ENCODE measurements at regions of chr7 and their contacts with region 1.

Region 1: DNA sequence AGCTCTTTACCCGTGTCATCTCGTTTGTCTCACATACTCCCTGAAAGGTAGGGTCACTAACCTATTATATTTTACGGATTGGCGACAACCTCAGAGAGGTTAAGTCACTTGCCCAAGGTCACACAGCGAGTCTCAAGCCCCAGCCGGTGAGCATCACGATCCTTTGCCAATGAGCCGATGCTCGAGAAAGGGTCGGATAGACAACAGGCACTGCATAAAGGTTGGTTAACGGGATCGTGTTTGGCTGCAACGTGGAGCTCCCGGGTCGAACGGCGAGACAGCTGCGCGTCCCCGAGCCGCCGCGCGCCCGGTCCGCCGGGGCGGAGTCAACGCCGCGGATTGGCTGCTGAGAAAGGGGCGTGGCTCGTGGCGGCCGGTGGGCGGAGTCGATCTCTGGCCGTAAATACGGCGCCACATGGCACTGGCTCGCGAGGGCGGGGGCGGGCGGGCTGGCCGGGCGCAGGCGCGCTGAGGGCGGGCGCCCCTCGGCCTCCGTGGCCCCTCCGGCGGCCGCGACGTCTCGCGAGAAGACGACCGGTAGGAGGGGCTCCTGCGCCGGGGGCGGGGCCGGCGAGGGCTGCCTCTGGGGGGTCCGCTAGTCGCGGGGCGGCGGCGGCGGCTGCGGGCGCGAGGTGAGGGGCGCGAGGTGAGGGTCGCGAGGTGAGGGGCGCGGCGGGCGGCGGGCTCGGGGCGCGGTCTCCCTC is at the start of gene CHST12:
- DNase-seq: peak; percentile 97
- ATAC-seq: peak; percentile 70
- H3K4me3 Mint-ChIP-seq: peak within 1 kb of the TSS; percentile 79
- H3K27ac Mint-ChIP-seq: no peak within 1 kb of the TSS
- H3K4me1 Mint-ChIP-seq: peaks cover 41% of the 10 kb centered on the region
- H3K27me3 Mint-ChIP-seq: peaks cover 6% of the 10 kb centered on the region
- total RNA-seq, gene CHST12: 1.8 to 1.9 TPM

Region 2: GRCh38 chr7:2019607-2020511 is 383.3 kb before region 1 on chr7:
- CTCF ChIA-PET with region 1: no interaction called
- POLR2A ChIA-PET with region 1: no interaction called
- intact Hi-C with region 1: loop called in 1 of 2 experiments (anchors 2 kb)
- DNase-seq: peak; percentile 81
- ATAC-seq: peak; percentile 93
- H3K4me3 Mint-ChIP-seq: peak overlapping the region; percentile 45
- H3K27ac Mint-ChIP-seq: peak overlapping the region; percentile 86
- H3K4me1 Mint-ChIP-seq: peaks cover 25% of the 10 kb centered on the region
- H3K27me3 Mint-ChIP-seq: no peaks in the 10 kb centered on the region

Region 3: GRCh38 chr7:2232766-2233520 is 170.2 kb before region 1 on chr7 and contains the start of gene MAD1L1:
- CTCF ChIA-PET with region 1: no interaction called
- POLR2A ChIA-PET with region 1: no interaction called
- intact Hi-C with region 1: loop called in 1 of 2 experiments (anchors 1 kb)
- DNase-seq: peak; percentile 95
- ATAC-seq: peak; percentile 94
- H3K4me3 Mint-ChIP-seq: peak within 1 kb of the TSS; percentile 83
- H3K27ac Mint-ChIP-seq: peak within 1 kb of the TSS; percentile 86
- H3K4me1 Mint-ChIP-seq: peaks cover 26% of the 10 kb centered on the region
- H3K27me3 Mint-ChIP-seq: no peaks in the 10 kb centered on the region
- total RNA-seq, gene MAD1L1: 50.2 to 61.7 TPM

Region 4: GRCh38 chr7:2241580-2242540 is 161.3 kb before region 1 on chr7 and contains the starts of genes MRM2 and NUDT1:
- CTCF ChIA-PET with region 1: no interaction called
- POLR2A ChIA-PET with region 1: no interaction called
- intact Hi-C with region 1: loop called in 1 of 2 experiments (anchors 1 kb)
- DNase-seq: peak; percentile 84
- ATAC-seq: peak; percentile 82
- H3K4me3 Mint-ChIP-seq: peak within 1 kb of the TSS; percentile 88
- H3K27ac Mint-ChIP-seq: peak within 1 kb of the TSS; percentile 88
- H3K4me1 Mint-ChIP-seq: peaks cover 10% of the 10 kb centered on the region
- H3K27me3 Mint-ChIP-seq: no peaks in the 10 kb centered on the region
- total RNA-seq, gene MRM2: 28.7 to 32.1 TPM
- total RNA-seq, gene NUDT1: 52.5 to 100 TPM

Region 5: DNA sequence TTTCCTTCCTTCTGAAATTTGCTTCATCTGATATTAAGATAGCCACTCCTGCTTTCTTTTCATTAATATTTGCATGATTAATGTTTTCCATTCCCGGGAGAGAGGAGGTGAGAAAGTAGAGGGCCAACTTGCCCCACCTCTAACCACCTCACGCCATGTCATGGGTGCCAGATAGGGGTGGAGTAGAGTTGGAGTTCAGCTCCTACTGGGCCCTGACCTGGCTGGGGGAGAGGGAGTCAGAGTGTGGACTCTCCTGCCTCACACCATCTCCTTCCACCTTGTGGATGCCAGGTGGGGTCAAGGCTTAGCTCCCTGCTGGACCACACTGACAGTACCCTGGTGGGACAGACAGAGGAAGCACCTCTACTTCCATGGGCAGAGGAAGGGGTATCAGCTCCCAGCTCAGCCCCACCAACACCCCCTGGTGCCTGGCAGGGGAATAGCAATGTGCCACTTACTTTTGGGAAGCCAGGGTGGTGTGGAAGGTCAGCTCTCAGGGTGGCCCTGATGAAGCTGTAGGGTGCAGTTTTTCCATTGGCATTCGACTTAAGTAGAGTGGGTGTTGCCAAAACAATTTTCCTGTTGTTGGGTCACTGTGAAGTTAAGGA is 28.2 kb after region 1 on chr7:
- CTCF ChIA-PET with region 1: interaction called, 17 read pairs
- POLR2A ChIA-PET with region 1: no interaction called
- intact Hi-C with region 1: no loop called
- DNase-seq: peak; percentile 68
- ATAC-seq: peak; percentile 76
- H3K4me3 Mint-ChIP-seq: no peak overlapping the region
- H3K27ac Mint-ChIP-seq: no peak overlapping the region
- H3K4me1 Mint-ChIP-seq: peaks cover 5% of the 10 kb centered on the region
- H3K27me3 Mint-ChIP-seq: no peaks in the 10 kb centered on the region

Region 6: DNA sequence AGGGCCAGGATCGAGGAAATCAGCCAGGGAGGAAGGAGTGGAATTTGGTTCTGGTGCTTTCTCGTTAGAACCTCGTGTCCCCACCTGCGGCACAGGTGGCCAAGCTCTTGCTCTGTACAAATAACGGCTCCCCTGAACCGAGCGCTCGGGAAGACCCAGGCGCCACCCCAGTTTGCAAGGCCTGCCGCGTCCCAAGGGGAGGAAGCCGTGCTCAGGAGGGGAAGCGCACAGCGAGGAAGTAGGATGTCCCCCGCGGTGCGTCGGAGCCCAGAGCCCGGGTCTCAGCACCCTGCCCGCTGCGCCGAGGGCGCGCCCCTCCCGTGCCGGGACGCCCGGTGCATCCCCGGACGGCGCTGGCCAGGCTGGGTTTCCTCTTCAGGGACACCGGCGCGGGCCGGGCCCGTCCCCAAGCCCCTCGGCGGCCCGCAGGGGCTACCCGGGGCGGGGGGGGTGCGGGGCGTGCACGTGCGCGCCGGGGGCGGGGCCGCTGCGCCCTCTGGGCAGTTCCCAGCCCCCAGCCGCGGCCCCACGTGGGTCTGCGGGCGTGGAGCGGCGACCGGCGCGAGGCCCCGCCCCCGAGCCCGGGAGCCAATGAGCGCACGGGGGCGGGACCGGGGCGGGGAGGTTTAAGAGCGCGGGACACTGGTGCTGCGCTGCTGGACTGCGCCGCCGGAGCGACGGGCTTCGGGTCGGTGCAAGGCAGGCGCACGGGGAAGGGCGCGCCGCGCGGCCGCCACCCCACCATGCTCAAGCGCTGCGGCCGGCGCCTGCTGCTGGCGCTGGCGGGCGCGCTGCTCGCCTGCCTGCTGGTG is 116.2 kb after region 1 on chr7 and contains the start of gene LFNG:
- CTCF ChIA-PET with region 1: no interaction called
- POLR2A ChIA-PET with region 1: no interaction called
- intact Hi-C with region 1: loop called (anchors 1 to 5 kb)
- DNase-seq: peak; percentile 91
- ATAC-seq: peak; percentile 75
- H3K4me3 Mint-ChIP-seq: peak within 1 kb of the TSS; percentile 89
- H3K27ac Mint-ChIP-seq: peak within 1 kb of the TSS; percentile 73
- H3K4me1 Mint-ChIP-seq: peaks cover 32% of the 10 kb centered on the region
- H3K27me3 Mint-ChIP-seq: no peaks in the 10 kb centered on the region
- total RNA-seq, gene LFNG: 14.9 to 23.3 TPM

Region 7: GRCh38 chr7:2632733-2633537 is 229.8 kb after region 1 on chr7:
- CTCF ChIA-PET with region 1: no interaction called
- POLR2A ChIA-PET with region 1: no interaction called
- intact Hi-C with region 1: loop called in 1 of 2 experiments (anchors 1 kb)
- DNase-seq: peak; percentile 77
- ATAC-seq: peak; percentile 7
- H3K4me3 Mint-ChIP-seq: peak overlapping the region; percentile 91
- H3K27ac Mint-ChIP-seq: peak overlapping the region; percentile 84
- H3K4me1 Mint-ChIP-seq: peaks cover 14% of the 10 kb centered on the region
- H3K27me3 Mint-ChIP-seq: no peaks in the 10 kb centered on the region

Measured in activated CD4-positive, alpha-beta T cell treated with anti-CD3 and anti-CD28 coated beads for 36 hours (primary cell).